WTC11 (cell line): ENCODE measurements at regions of chr1 and their contacts with region 1.

Region 1: GRCh38 chr1:94061513-94062443 is 59.2 kb downstream of the ABCA4 start:
- DNase-seq: peak; percentile 78
- ATAC-seq: peak; percentile 97
- H3K4me3 Mint-ChIP-seq: no peak overlapping the region
- H3K27ac Mint-ChIP-seq: no peak overlapping the region
- H3K4me1 Mint-ChIP-seq: peaks cover 17% of the 10 kb centered on the region
- H3K27me3 Mint-ChIP-seq: peaks cover 35% of the 10 kb centered on the region
- CTCF ChIP-seq: peak; percentile 85

Region 2: GRCh38 chr1:94039514-94039870 is 22.3 kb before region 1 on chr1:
- CTCF ChIA-PET with region 1: interaction called, 30 read pairs
- POLR2A ChIA-PET with region 1: no interaction called
- DNase-seq: peak; percentile 86
- ATAC-seq: peak; percentile 90
- H3K4me3 Mint-ChIP-seq: no peak overlapping the region
- H3K27ac Mint-ChIP-seq: no peak overlapping the region
- H3K4me1 Mint-ChIP-seq: peaks cover 20% of the 10 kb centered on the region
- H3K27me3 Mint-ChIP-seq: peaks cover 5% of the 10 kb centered on the region; the same call in 1 of the 2 replicates
- CTCF ChIP-seq: peak; percentile 84

Region 3: GRCh38 chr1:94132111-94132510 is 70.3 kb after region 1 on chr1:
- CTCF ChIA-PET with region 1: no interaction called
- POLR2A ChIA-PET with region 1: no interaction called
- DNase-seq: no peak
- ATAC-seq: no peak
- H3K4me3 Mint-ChIP-seq: no peak overlapping the region
- H3K27ac Mint-ChIP-seq: no peak overlapping the region
- H3K4me1 Mint-ChIP-seq: no peaks in the 10 kb centered on the region; the same call in 1 of the 2 replicates
- H3K27me3 Mint-ChIP-seq: peaks cover 3% of the 10 kb centered on the region; the same call in 1 of the 2 replicates
- CTCF ChIP-seq: no peak

Region 4: DNA sequence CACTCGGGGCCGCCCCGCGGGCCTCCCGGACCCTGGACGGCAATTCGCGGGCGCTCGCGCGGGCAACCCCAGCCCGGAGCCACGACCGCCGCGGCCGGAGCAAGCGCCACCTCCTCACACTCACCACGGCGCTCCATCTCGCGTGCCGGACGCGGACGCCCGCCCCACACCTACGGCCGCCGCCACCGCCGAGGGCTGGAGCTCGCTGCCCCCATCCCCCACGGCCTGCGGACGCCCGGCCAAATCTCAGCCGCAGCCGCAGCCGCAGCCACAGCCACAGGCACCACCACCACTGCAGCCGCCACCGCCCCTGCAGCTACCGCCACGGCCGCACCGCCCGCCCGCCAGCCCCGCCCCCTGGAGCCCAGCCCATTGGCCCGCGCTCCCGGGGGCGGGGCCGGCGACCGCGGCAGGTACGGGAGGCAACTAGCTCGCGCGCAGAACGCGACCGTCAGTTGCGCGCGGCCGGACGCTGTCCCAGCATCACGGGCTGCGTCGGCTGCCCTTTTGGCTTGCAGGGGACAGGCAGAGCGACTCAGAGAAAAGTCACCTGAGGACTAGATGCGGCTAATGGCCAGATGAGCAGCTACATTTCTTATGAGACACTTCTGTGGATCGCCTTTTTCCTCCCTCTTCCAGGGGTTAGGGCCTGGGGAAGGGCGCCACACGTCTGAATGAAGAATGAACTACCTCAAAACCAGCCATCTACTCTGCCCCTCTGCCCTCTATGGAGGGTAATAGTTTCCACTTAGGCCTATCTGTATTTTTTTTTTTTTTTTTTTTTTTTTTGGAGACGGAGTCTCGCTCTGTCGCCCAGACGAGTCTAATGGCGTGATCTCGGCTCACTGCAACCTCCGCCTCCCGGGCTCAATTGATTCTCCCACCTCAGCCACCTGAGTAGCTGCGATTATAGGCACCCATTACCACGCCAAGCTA is 175.8 kb after region 1 on chr1 and contains the start of gene ARHGAP29:
- CTCF ChIA-PET with region 1: interaction called, 72 read pairs
- POLR2A ChIA-PET with region 1: no interaction called
- DNase-seq: peak; percentile 92
- ATAC-seq: peak; percentile 89
- H3K4me3 Mint-ChIP-seq: peak within 1 kb of the TSS; percentile 79
- H3K27ac Mint-ChIP-seq: peak within 1 kb of the TSS; percentile 41; the same call in 1 of the 2 replicates
- H3K4me1 Mint-ChIP-seq: peaks cover 24% of the 10 kb centered on the region
- H3K27me3 Mint-ChIP-seq: peaks cover 65% of the 10 kb centered on the region
- CTCF ChIP-seq: no peak
- total RNA-seq, gene ARHGAP29: 3.5 to 6.6 TPM (median 4.4 TPM) in 3 replicates

Region 5: DNA sequence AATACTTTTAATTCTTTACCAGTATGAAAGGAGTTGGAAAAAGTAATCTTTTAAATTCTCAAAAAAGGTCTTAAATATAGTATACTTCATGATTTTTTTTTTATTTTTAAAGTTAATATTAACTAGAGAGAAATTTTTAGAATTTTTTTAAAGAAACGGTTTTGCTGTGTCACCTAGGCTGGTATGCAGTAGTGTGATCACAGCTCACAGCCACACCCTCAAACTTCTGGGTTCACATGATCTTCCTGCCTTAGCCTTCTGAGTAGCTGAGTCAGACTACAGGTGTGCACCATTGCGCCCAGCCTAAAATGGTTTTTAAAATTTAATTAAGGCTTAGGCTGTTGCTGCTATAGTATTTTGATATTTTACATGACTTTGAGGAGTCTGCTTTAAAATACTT is 1107.8 kb after region 1 on chr1:
- CTCF ChIA-PET with region 1: no interaction called
- POLR2A ChIA-PET with region 1: no interaction called
- DNase-seq: no peak
- ATAC-seq: no peak
- H3K4me3 Mint-ChIP-seq: no peak overlapping the region
- H3K27ac Mint-ChIP-seq: no peak overlapping the region
- H3K4me1 Mint-ChIP-seq: peaks cover 8% of the 10 kb centered on the region
- H3K27me3 Mint-ChIP-seq: no peaks in the 10 kb centered on the region
- CTCF ChIP-seq: no peak